Motor neuron (in vitro differentiated cells): ENCODE measurements at regions of chr17 and their contacts with region 1.

Region 1: DNA sequence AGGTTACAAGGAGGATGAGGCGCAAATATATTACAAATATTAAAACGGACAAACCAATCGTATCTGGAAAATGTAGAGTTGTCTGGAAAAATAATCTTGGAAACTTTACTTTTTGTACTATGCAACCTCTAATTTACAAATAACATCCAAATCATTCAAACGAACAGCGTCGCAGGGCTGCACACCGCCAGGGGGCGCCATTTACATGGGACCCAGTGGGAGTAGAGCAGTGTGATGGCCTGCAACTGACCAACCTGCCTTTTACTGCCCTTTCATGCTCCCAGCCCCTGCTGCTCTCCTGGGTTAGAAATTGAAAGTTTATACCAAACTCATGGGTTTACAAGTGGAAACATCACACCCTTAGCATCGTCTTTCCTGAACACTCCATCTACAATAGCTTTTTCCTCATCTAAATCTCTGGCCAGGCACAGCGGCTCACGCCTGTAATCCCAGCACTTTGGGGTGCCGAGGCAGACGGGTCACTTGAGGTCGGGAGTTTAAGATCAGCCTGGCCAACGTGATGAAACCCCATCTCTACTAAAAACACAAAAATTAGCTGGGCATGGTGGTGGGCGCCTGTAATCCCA is 10.0 kb downstream of the PITPNC1 start:
- ATAC-seq: peak; percentile 29 to 63 (median 54)
- H3K4me3 ChIP-seq: no peak overlapping the region
- H3K27ac ChIP-seq: no peak overlapping the region
- H3K4me1 ChIP-seq: peaks cover 0 to 3% of the 10 kb centered on the region in 2 donors

Region 2: GRCh38 chr17:67475236-67475937 is 88.3 kb after region 1 on chr17:
- in situ Hi-C with region 1: loop called in 3 of 9 experiments (anchors 10 to 25 kb)
- ATAC-seq: peak; percentile 39 to 83 (median 72)
- H3K4me3 ChIP-seq: peak overlapping the region in 1 of 5 donors; percentile 2
- H3K27ac ChIP-seq: peak overlapping the region in 1 of 2 donors; percentile 15
- H3K4me1 ChIP-seq: peaks cover 17 to 31% of the 10 kb centered on the region in 2 donors

Region 3: GRCh38 chr17:67615011-67615561 is 228.0 kb after region 1 on chr17:
- in situ Hi-C with region 1: loop called in 2 of 9 experiments (anchors 10 to 25 kb)
- ATAC-seq: peak in 1 of 8 experiments; percentile 8
- H3K4me3 ChIP-seq: no peak overlapping the region
- H3K27ac ChIP-seq: no peak overlapping the region
- H3K4me1 ChIP-seq: peaks cover 0 to 6% of the 10 kb centered on the region in 2 donors